HepG2 (cell line): ENCODE measurements at regions of chr3 and their contacts with region 1.

Region 1: GRCh38 chr3:181709537-181710279 is 2.0 kb upstream of the SOX2 start:
- DNase-seq: peak; percentile 19
- ATAC-seq: no peak
- H3K4me3 ChIP-seq: no peak overlapping the region
- H3K27ac ChIP-seq: no peak overlapping the region
- H3K4me1 ChIP-seq: peaks cover 11% of the 10 kb centered on the region; the same call in 1 of the 2 replicates
- H3K27me3 ChIP-seq: peaks cover 4 to 46% of the 10 kb centered on the region in 2 experiments; a peak in 4 of 5 replicates
- CTCF ChIP-seq: peak; percentile 70
- EP300 ChIP-seq: no peak
- POLR2A ChIP-seq: no peak
- RAD21 ChIP-seq: peak; percentile 26; the same call in 1 of the 2 replicates

Region 2: DNA sequence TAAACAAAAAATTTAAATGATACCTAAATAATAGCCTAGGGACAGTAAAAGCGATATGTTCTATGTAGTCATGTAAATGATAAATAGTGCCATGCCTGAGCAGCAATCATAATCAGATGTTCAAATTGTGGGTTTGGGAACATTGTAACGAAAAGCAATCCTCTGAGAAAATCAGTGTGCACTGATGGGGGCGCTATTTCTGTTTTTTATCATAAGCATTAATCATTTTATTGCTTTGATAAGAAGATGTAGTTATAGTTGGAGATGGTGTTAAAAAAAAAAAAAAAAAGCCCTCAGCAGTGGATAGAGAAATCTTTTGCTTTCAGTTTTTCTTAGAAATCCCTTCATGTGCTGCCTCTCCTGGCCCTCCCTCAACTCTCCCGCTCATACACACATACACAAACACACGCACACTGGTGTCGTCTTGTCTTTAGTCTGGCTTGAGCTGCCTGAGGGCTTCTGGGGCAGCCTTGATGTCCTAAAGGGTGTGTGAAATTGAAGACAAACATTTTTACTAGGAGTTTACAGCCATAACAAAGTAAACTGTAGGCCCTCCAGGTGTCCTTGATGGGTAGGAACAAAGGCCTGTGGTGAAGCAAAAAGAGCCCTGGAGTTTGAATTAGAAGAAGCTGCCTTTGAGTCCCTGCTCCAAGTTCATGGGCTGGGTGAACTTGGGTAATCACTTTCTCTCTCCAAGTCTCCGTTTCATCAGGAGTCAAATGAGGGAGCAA is 430.1 kb after region 1 on chr3:
- CTCF ChIA-PET with region 1: no interaction called
- POLR2A ChIA-PET with region 1: no interaction called
- in situ Hi-C with region 1: no loop called
- intact Hi-C with region 1: loop called (anchors 1 kb)
- DNase-seq: no peak
- ATAC-seq: no peak
- H3K4me3 ChIP-seq: no peak overlapping the region
- H3K27ac ChIP-seq: no peak overlapping the region
- H3K4me1 ChIP-seq: peaks cover 18% of the 10 kb centered on the region
- H3K27me3 ChIP-seq: no peaks in the 10 kb centered on the region; a peak in 1 of 5 replicates
- CTCF ChIP-seq: no peak
- EP300 ChIP-seq: no peak
- POLR2A ChIP-seq: no peak
- RAD21 ChIP-seq: no peak

Region 3: DNA sequence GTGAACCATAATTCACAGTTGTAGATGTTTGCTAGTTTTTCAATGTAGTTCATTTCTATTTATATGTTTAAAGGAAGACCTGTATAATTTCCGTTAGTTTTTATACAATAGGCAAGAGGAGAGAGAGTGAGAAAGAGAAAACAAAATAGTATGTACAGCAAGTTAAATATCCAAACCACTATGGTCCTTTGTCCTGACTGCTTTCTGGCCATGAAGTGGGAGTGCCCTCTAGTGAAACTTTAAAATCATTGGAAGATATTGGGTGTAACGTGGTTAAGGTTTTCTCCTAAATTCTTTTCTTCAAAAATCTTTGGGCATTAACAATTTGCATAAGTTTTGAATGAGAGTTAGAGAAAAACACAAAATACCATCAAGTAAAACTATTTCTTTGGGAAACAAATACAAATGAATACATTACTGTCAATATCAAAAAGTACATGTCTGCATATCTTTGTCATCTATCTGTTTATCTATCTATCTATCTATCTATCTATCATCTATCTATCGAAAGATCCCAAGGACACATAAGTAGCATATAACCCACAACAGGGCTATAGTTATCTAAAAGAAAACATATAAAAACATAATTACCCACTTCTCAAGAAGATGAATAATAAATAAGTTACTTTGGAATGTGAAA is 549.0 kb after region 1 on chr3:
- CTCF ChIA-PET with region 1: interaction called, 23 read pairs
- POLR2A ChIA-PET with region 1: no interaction called
- in situ Hi-C with region 1: loop called (anchors 5 kb)
- intact Hi-C with region 1: loop called (anchors 1 kb)
- DNase-seq: peak; percentile 45
- ATAC-seq: peak; percentile 63
- H3K4me3 ChIP-seq: no peak overlapping the region
- H3K27ac ChIP-seq: no peak overlapping the region
- H3K4me1 ChIP-seq: no peaks in the 10 kb centered on the region
- H3K27me3 ChIP-seq: 0 out of 5 replicates have a peak, but pooled peaks cover 0 to 3% of the 10 kb centered on the region in 2 experiments
- CTCF ChIP-seq: peak; percentile 80
- EP300 ChIP-seq: no peak
- POLR2A ChIP-seq: no peak
- RAD21 ChIP-seq: peak; percentile 67

Region 4: GRCh38 chr3:182490596-182491491 is 781.1 kb after region 1 on chr3:
- CTCF ChIA-PET with region 1: interaction called, 5 read pairs
- POLR2A ChIA-PET with region 1: no interaction called
- in situ Hi-C with region 1: loop called (anchors 25 kb)
- intact Hi-C with region 1: loop called (anchors 1 kb)
- DNase-seq: peak; percentile 7
- ATAC-seq: 0 out of 3 replicates have a peak, but pooled peaks have one; percentile 38
- H3K4me3 ChIP-seq: no peak overlapping the region
- H3K27ac ChIP-seq: no peak overlapping the region
- H3K4me1 ChIP-seq: no peaks in the 10 kb centered on the region
- H3K27me3 ChIP-seq: no peaks in the 10 kb centered on the region
- CTCF ChIP-seq: peak; percentile 41
- EP300 ChIP-seq: no peak
- POLR2A ChIP-seq: no peak
- RAD21 ChIP-seq: no peak

Region 5: GRCh38 chr3:182618085-182618732 is 908.5 kb after region 1 on chr3:
- CTCF ChIA-PET with region 1: no interaction called
- POLR2A ChIA-PET with region 1: no interaction called
- in situ Hi-C with region 1: loop called (anchors 5 kb)
- intact Hi-C with region 1: no loop called
- DNase-seq: peak; percentile 12
- ATAC-seq: peak; percentile 68
- H3K4me3 ChIP-seq: no peak overlapping the region
- H3K27ac ChIP-seq: no peak overlapping the region
- H3K4me1 ChIP-seq: no peaks in the 10 kb centered on the region
- H3K27me3 ChIP-seq: no peaks in the 10 kb centered on the region
- CTCF ChIP-seq: peak; percentile 70
- EP300 ChIP-seq: no peak
- POLR2A ChIP-seq: no peak
- RAD21 ChIP-seq: peak; percentile 53